H1 (cell line): ENCODE measurements at regions of chr22 and their contacts with region 1.

Region 1: DNA sequence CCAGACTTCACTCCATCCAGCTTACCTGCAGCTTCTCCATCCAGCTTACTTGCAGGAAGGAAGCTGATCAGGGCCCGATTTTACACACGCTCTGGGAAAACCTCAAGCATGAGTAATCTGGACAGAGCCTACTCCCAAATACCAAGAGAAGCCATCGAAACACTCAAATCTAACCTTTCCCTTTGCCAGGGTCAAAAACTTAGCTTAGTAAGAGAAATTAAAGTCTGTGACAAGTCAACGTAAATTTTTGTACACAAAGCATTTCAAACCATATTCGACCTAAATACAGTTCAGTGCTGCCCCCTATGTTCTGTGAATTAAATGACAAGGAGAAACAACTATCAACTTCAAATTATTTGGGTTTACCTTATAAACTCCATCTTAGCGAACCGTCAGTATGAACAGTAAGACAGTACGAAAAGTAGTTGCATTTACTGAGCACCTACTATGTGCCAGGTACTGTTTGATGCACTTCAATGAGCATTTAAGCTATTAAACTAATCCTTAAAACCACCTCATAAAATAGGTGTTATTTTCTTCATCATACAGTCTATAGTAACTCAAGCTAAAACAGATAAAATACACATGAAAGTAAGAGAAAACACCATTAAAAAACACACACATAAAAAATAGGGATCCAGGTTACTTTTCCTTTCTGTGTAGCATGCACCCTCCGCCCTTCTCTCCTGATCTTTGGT is 36.9 kb downstream of the ARFGAP3 start:
- DNase-seq: no peak
- H3K4me3 ChIP-seq: no peak overlapping the region
- H3K27ac ChIP-seq: no peak overlapping the region
- H3K4me1 ChIP-seq: no peaks in the 10 kb centered on the region
- H3K27me3 ChIP-seq: no peaks in the 10 kb centered on the region
- CTCF ChIP-seq: peak in 2 of 3 experiments; percentile 40 to 62; a peak in 2 of 4 replicates
- EP300 ChIP-seq: no peak
- POLR2A ChIP-seq: no peak
- RAD21 ChIP-seq: peak; percentile 70 to 73

Region 2: DNA sequence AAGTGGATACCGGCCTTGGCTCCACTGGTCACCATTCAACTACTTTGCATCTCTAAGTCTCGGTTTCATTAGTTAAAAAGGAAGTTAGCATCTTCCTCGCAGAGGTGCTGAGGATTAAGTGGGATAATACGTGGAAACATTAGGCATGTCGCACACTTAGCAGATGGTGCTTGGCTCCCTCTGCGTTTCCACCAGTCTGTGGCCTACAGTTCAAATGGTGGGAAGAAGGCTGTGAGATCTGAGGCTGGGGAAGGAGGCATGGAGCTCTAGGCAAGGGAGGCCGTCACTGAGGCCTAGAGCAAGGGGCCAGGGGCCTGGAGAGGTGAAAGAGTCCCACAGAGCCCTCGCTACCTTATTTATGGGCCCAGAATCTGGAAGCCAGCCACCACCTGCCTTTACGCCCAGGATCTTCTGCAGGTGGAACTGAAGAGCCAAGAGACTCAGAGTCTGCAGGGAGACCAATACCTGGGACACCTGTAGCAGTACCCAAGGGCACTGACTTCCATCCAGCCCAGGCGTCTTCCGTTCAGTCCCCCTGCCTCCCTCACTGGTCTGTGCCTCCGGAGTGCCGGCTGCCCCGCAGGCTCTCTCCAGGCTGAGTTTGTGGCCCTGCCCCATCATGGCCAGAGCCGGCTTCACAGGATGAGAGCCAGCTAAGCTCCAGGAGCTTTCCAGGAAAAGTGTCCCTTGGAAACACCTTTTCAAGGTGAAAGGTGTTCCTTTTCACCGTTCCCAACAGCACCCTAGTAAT is 33.4 kb before region 1 on chr22:
- CTCF ChIA-PET with region 1: interaction called, 32 read pairs
- POLR2A ChIA-PET with region 1: no interaction called
- DNase-seq: no peak
- H3K4me3 ChIP-seq: no peak overlapping the region
- H3K27ac ChIP-seq: no peak overlapping the region
- H3K4me1 ChIP-seq: no peaks in the 10 kb centered on the region; a peak in 1 of 7 replicates
- H3K27me3 ChIP-seq: no peaks in the 10 kb centered on the region
- CTCF ChIP-seq: no peak
- EP300 ChIP-seq: no peak
- POLR2A ChIP-seq: no peak
- RAD21 ChIP-seq: no peak

Region 3: DNA sequence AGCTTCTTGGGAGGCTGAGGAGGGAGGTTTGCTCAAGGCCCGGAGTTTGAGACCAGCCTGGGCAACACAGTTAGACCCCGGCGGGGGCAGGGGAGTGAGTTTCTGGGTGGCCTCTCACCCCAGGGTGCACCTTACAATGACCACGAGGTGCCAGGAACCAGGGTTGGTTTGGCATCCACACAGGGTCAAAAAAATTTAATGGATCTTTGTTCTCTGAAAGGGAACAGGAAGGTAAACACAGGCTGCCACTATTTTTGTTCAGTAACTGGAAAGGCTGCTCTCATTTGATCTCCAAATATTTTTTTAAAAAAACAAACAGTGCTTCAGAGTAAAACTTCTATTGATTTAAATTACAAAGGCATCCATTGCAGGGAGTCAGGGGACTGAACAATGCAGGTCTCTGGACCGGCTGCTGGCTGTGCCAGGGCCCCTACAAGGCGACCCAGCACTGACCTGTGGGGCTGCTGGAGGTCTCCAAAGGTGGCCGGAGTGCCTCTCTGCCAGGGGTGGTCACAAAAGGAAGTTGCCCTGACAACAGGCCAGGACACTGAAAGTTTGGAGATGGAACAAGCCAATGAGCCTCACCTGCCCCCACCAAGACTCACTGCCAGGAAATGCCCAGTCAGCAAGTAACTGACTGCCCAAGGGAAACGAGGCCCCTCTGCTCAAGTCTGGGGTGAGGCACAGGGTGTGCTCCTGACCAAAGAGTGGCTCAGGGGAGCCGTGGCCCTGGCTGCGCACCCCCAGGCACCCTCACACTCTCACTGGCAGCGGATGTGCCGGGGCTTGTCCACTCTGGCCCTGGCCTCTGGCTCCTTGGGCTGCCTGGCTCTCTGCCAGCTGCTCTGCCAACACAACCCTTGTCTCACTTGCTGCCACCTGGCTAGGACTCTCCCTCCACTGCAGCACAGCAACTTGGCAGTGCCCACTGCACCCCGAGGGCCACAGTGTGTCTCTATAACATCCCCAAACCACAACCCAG is 14.9 kb before region 1 on chr22:
- CTCF ChIA-PET with region 1: interaction called, 37 read pairs
- POLR2A ChIA-PET with region 1: interaction called, 6 read pairs
- DNase-seq: no peak
- H3K4me3 ChIP-seq: no peak overlapping the region
- H3K27ac ChIP-seq: 0 out of 2 replicates have a peak overlapping the region, but pooled peaks have one; percentile 39
- H3K4me1 ChIP-seq: peaks cover 0 to 12% (median 8%) of the 10 kb centered on the region in 4 experiments; a peak in 6 of 7 replicates
- H3K27me3 ChIP-seq: no peaks in the 10 kb centered on the region
- CTCF ChIP-seq: no peak
- EP300 ChIP-seq: no peak
- POLR2A ChIP-seq: no peak
- RAD21 ChIP-seq: no peak

Region 4: DNA sequence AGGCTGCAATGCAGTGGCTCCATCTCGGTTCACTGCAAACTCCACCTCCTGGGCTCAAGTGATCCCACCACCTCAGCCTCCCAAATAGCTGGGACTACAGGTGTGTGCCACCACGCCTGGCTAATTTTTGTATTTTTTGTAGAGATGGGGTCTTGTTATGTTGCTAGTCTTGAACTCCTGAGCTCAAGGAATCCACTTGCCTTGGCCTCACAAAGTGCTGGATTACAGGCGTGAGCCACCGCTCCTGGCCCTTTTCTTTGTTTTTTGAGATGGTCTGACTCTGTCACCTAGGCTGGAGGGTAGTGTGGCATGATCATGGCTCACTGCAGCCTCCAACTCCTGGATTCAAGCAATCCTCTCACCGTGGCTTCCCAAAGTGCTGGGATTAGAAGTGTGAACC is 15.8 kb after region 1 on chr22:
- CTCF ChIA-PET with region 1: interaction called, 15 read pairs
- POLR2A ChIA-PET with region 1: no interaction called
- DNase-seq: no peak
- H3K4me3 ChIP-seq: no peak overlapping the region
- H3K27ac ChIP-seq: no peak overlapping the region
- H3K4me1 ChIP-seq: no peaks in the 10 kb centered on the region
- H3K27me3 ChIP-seq: no peaks in the 10 kb centered on the region
- CTCF ChIP-seq: no peak
- EP300 ChIP-seq: no peak
- POLR2A ChIP-seq: no peak
- RAD21 ChIP-seq: no peak

Region 5: GRCh38 chr22:42868751-42869251 is 48.6 kb after region 1 on chr22:
- CTCF ChIA-PET with region 1: interaction called, 23 read pairs
- POLR2A ChIA-PET with region 1: no interaction called
- DNase-seq: no peak
- H3K4me3 ChIP-seq: no peak overlapping the region
- H3K27ac ChIP-seq: no peak overlapping the region
- H3K4me1 ChIP-seq: no peaks in the 10 kb centered on the region
- H3K27me3 ChIP-seq: no peaks in the 10 kb centered on the region
- CTCF ChIP-seq: no peak
- EP300 ChIP-seq: no peak
- POLR2A ChIP-seq: no peak
- RAD21 ChIP-seq: no peak

Region 6: DNA sequence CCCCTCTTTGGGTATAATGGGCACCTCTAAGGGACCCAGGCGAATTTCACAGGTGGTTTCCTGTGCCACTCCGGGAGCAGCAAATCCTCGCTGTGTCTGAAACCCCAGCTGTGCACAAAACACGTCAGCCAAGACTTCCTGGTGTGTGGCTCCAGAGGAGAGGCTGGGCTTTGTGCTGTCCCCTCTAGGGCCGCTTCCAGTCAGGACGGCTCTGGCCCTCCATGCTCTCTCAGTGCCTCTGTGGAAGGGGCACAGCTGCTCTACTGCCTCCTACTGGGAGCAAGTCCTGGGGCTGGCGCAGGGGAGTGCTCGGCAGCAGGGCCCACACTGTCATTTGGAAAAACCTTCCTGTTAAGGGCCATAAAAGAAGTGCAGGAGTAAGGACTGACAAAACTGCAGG is 60.6 kb after region 1 on chr22:
- CTCF ChIA-PET with region 1: no interaction called
- POLR2A ChIA-PET with region 1: no interaction called
- DNase-seq: no peak
- H3K4me3 ChIP-seq: no peak overlapping the region
- H3K27ac ChIP-seq: no peak overlapping the region
- H3K4me1 ChIP-seq: peaks cover 0 to 7% (median 4%) of the 10 kb centered on the region in 4 experiments; a peak in 6 of 7 replicates
- H3K27me3 ChIP-seq: no peaks in the 10 kb centered on the region
- CTCF ChIP-seq: peak; percentile 50 to 72 (median 66)
- EP300 ChIP-seq: no peak
- POLR2A ChIP-seq: no peak
- RAD21 ChIP-seq: peak; percentile 35 to 52

Region 7: DNA sequence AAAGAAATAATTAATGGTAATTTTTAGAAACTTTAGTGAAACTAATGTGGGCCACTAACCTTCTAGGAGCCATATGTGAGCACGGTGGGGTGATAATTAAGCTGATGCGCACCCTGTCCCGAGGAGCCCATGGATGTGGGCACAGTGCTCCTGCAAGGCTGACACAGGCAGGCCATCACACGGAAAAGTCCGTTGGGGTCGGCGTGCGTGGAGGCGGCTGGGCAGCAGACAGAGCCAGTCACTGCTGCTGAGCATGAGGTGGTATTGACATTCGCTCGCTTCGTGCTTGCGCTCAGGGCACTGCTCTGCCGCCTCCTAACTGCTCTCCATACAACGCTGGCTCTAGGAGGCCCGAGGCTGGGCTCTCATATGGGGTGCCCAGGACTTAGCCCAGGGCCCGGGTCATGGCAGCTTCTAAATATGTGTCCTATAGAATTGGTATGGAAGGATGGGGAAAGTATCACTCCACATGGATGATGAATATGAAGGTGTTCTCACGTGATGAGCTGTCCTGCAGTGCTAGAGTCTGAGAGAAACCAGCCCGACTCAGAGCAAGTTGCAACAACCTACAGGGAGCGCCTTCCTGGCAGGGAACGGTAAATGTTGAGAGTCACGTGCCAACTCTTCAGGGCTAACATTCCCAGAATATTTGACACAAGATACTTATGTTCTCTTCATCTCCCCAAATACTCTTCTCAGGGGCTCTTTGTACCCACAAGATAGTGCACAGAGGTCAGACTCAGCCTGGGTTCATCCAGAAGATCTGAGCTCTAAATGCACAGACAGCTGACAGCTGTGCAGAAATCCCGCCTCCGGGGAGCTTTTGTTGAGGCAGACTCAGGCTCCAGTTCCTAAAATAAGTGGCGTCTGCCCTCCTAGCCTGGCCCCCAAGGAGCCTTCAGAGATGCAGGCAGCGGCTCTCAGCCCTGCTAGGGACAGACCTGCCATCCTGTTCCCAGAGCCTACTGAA is 87.5 kb after region 1 on chr22:
- CTCF ChIA-PET with region 1: no interaction called
- POLR2A ChIA-PET with region 1: no interaction called
- DNase-seq: no peak
- H3K4me3 ChIP-seq: no peak overlapping the region
- H3K27ac ChIP-seq: no peak overlapping the region
- H3K4me1 ChIP-seq: peaks cover 0 to 13% (median 6%) of the 10 kb centered on the region in 4 experiments; a peak in 5 of 7 replicates
- H3K27me3 ChIP-seq: no peaks in the 10 kb centered on the region
- CTCF ChIP-seq: no peak
- EP300 ChIP-seq: no peak
- POLR2A ChIP-seq: no peak
- RAD21 ChIP-seq: no peak

Region 8: DNA sequence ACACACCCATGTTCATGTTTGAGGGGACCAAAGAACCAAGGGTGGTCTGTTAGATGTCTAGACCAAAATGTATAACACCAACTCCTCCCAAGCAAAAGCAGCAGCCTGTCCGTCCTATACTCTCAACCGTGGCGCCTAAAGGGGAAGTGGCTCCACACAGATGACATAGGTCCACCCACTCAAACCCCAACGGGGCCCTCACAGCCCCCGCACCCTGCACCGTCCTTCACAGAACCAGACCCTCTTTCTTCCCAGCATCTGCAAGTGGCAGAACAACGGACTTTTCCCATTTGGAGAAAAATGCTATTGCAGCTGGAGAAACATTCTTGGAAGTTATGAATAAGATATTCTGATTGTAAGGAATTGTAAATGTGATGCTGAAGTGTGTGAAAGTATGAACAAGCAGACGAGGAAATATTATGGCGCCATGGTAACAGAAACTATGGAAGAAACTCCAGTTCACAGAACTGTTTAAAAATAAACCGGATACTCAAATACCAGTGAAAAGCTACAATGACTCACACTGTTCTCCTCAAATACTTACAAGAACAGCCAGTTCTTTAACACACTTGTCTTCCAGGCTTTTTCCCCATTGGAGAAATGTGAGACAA is 113.4 kb after region 1 on chr22:
- CTCF ChIA-PET with region 1: no interaction called
- POLR2A ChIA-PET with region 1: no interaction called
- DNase-seq: no peak
- H3K4me3 ChIP-seq: no peak overlapping the region
- H3K27ac ChIP-seq: no peak overlapping the region
- H3K4me1 ChIP-seq: peaks cover 0 to 3% (median 0%) of the 10 kb centered on the region in 4 experiments; a peak in 2 of 7 replicates
- H3K27me3 ChIP-seq: no peaks in the 10 kb centered on the region
- CTCF ChIP-seq: no peak
- EP300 ChIP-seq: no peak
- POLR2A ChIP-seq: no peak
- RAD21 ChIP-seq: no peak